HEK293T (cell line): ENCODE measurements at regions of chr22 and their contacts with region 1.

Region 1: GRCh38 chr22:36028646-36029405 is at the start of gene RBFOX2:
- DNase-seq: peak; percentile 100

Region 2: DNA sequence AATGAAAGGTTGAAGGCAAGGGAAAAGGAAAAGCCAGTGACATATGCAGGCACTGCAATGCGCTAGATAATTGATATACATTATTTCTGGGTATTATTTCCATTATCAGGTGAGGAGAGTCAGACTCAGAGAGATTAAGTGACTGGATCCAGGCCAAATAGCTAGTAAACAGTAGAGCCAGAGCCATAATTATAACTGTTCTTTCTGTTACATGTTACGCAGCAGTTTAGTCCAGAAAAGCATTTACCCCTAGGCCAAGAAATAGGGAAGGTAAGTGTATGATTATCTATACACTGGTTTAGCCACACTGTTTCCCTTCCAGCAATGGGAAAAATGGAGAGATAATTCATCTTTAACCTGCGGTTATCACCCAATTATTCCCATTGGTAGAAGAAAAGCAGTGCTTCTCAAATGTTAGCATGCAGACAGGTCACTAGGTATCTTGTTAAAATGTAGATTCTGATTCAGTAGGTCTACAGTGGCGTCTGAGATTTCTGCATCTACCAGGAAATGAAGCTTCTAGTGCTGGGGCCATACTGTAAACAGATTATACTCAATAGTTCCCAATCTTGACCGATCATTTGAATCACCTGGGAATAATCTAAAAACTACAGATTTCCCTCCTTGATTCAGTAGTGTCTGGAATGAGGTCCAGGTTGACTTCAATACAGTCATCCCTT is 69.6 kb before region 1 on chr22:
- CTCF ChIA-PET with region 1: no interaction called
- POLR2A ChIA-PET with region 1: no interaction called
- DNase-seq: no peak

Region 3: GRCh38 chr22:36017651-36018091 is 11.2 kb before region 1 on chr22:
- CTCF ChIA-PET with region 1: no interaction called
- POLR2A ChIA-PET with region 1: interaction called, 17 read pairs
- DNase-seq: no peak

Region 4: GRCh38 chr22:36081023-36081431 is 52.2 kb after region 1 on chr22:
- CTCF ChIA-PET with region 1: no interaction called
- POLR2A ChIA-PET with region 1: no interaction called
- DNase-seq: no peak